ENCODE measurements at regions of chr19 and their contacts with region 1.

Region 1: GRCh38 chr19:45439569-45440254 is 16.0 kb upstream of the ERCC1 start:
- DNase-seq: peak; percentile 82 to 90 (median 87)
- H3K4me3 ChIP-seq: peak overlapping the region in 2 of 3 experiments; percentile 49 to 73
- H3K4me3 Mint-ChIP-seq: peak overlapping the region; percentile 69 to 73
- H3K27ac ChIP-seq: peak overlapping the region in 1 of 2 donors; percentile 73
- H3K27ac Mint-ChIP-seq: peak overlapping the region in 6 of 7 donors; percentile 78 to 93 (median 86)
- H3K4me1 ChIP-seq: peaks cover 40 to 52% of the 10 kb centered on the region in 2 donors
- H3K4me1 Mint-ChIP-seq: peaks cover 40% of the 10 kb centered on the region
- H3K27me3 ChIP-seq: peaks cover 0 to under 1% of the 10 kb centered on the region in 2 donors
- H3K27me3 Mint-ChIP-seq: peaks cover 0 to 4% (median 1%) of the 10 kb centered on the region in 3 donors
- CTCF ChIP-seq: peak; percentile 100

Region 2: GRCh38 chr19:45276284-45276687 is 163.4 kb before region 1 on chr19:
- intact Hi-C with region 1: no loop called
- DNase-seq: no peak
- H3K4me3 ChIP-seq: no peak overlapping the region
- H3K4me3 Mint-ChIP-seq: no peak overlapping the region
- H3K27ac ChIP-seq: no peak overlapping the region
- H3K27ac Mint-ChIP-seq: peak overlapping the region in 2 of 7 donors; percentile 5 to 6
- H3K4me1 ChIP-seq: peaks cover 0 to 6% of the 10 kb centered on the region in 2 donors
- H3K4me1 Mint-ChIP-seq: peaks cover 4% of the 10 kb centered on the region
- H3K27me3 ChIP-seq: no peaks in the 10 kb centered on the region
- H3K27me3 Mint-ChIP-seq: no peaks in the 10 kb centered on the region
- CTCF ChIP-seq: no peak

Region 3: DNA sequence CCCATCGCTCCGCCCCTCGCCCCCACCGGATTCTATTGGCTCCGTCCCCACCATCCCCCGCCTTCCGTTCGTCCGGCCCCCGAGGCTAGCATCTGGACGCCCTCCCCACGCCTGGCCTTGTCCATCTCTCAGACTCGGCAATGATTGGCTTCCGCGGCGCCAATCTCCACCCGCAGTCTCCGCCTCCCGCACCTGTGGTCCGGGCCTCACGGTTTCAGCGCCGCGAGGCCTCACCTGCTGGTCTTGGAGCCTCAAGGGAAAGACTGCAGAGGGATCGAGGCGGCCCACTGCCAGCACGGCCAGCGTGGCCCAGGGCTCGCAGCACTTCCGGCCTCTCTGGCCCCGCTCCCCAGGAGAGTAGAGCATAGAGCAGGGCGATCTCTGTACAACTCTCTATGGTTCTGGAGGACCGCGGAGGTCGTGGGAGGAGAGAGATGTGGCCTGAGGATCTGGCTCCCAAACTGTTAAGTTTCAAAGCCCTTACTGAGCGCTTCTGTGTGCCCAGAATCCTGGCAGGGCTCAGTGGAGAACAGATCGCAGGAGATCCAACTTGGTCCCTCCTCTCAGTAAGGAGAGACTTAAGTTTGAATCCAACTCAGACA is 16.0 kb before region 1 on chr19 and contains the start of gene ERCC1:
- intact Hi-C with region 1: loop called in 1 of 2 experiments (anchors 2 kb)
- DNase-seq: peak; percentile 69 to 79 (median 70)
- H3K4me3 ChIP-seq: peak within 1 kb of the TSS; percentile 66 to 93 (median 76)
- H3K4me3 Mint-ChIP-seq: peak within 1 kb of the TSS; percentile 92 to 93
- H3K27ac ChIP-seq: peak within 1 kb of the TSS; percentile 88 to 94
- H3K27ac Mint-ChIP-seq: peak within 1 kb of the TSS; percentile 93 to 99 (median 96)
- H3K4me1 ChIP-seq: peaks cover 60 to 84% of the 10 kb centered on the region in 2 donors
- H3K4me1 Mint-ChIP-seq: peaks cover 66% of the 10 kb centered on the region
- H3K27me3 ChIP-seq: peaks cover 3 to 5% of the 10 kb centered on the region in 2 donors
- H3K27me3 Mint-ChIP-seq: peaks cover 6 to 12% (median 10%) of the 10 kb centered on the region in 3 donors
- CTCF ChIP-seq: no peak
- polyA plus RNA-seq, gene ERCC1: 62.2 to 78.2 (median 74.6) TPM

Region 4: GRCh38 chr19:45455707-45456499 is 16.2 kb after region 1 on chr19:
- intact Hi-C with region 1: loop called (anchors 1 to 2 kb)
- DNase-seq: peak; percentile 98 to 100 (median 98)
- H3K4me3 ChIP-seq: peak overlapping the region in 1 of 3 experiments; percentile 11
- H3K4me3 Mint-ChIP-seq: peak overlapping the region; percentile 60 to 75
- H3K27ac ChIP-seq: peak overlapping the region; percentile 92
- H3K27ac Mint-ChIP-seq: peak overlapping the region; percentile 97 to 99 (median 98)
- H3K4me1 ChIP-seq: peaks cover 56 to 61% of the 10 kb centered on the region in 2 donors
- H3K4me1 Mint-ChIP-seq: peaks cover 51% of the 10 kb centered on the region
- H3K27me3 ChIP-seq: peaks cover 0 to 13% of the 10 kb centered on the region in 2 donors
- H3K27me3 Mint-ChIP-seq: peaks cover 19 to 22% (median 19%) of the 10 kb centered on the region in 3 donors
- CTCF ChIP-seq: no peak

Region 5: GRCh38 chr19:45478454-45479238 is 38.9 kb after region 1 on chr19:
- intact Hi-C with region 1: loop called (anchors 1 to 2 kb)
- DNase-seq: peak; percentile 86 to 94 (median 92)
- H3K4me3 ChIP-seq: peak overlapping the region; percentile 38 to 74 (median 53)
- H3K4me3 Mint-ChIP-seq: peak overlapping the region; percentile 83 to 87
- H3K27ac ChIP-seq: peak overlapping the region; percentile 73 to 91
- H3K27ac Mint-ChIP-seq: peak overlapping the region; percentile 73 to 98 (median 94)
- H3K4me1 ChIP-seq: peaks cover 15 to 16% of the 10 kb centered on the region in 2 donors
- H3K4me1 Mint-ChIP-seq: peaks cover 29% of the 10 kb centered on the region
- H3K27me3 ChIP-seq: peaks cover 0 to 29% of the 10 kb centered on the region in 2 donors
- H3K27me3 Mint-ChIP-seq: peaks cover 34 to 50% (median 43%) of the 10 kb centered on the region in 3 donors
- CTCF ChIP-seq: peak; percentile 83

Measured in CD14-positive monocyte (primary cell).